Activated T-helper 2 cell treated with anti-CD3 and anti-CD28 coated beads, Interferon-gamma antibody, Interleukin-2, Interleukin-4, amounts not matched to agents 10 μg/mL and 5 μg/mL and 100 μg/mL, durations not matched to agents 14 hours and 24 hours and 36 hours (primary cell): ENCODE measurements at regions of chr21 and their contacts with region 1.

Region 1: DNA sequence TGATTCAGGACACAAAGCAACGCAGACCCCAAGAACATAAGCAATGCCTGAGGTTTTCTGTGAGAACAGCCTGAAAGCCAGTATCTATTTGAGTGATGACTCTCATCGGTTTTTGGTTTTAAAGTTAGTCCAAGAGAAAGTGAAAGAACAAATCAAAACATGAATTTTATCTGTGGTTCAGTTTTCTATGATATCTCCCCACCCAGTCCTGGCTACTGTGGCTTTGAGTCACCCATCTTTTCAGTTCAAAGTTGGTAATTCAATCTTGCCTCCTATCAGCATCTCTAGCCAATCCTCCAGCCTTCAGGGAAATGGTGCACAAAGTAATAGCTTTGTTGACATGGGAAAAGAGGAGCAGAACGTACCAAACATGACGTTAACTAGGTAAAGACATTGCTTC is 40.5 kb upstream of the KRTAP19-8 start:
- DNase-seq: no peak
- H3K4me3 Mint-ChIP-seq: no peak overlapping the region
- H3K27ac Mint-ChIP-seq: no peak overlapping the region
- H3K4me1 Mint-ChIP-seq: peaks cover 17% of the 10 kb centered on the region
- H3K27me3 Mint-ChIP-seq: peaks cover 61% of the 10 kb centered on the region

Region 2: GRCh38 chr21:30839304-30839703 is 239.5 kb before region 1 on chr21:
- intact Hi-C with region 1: loop called (anchors 5 kb)
- DNase-seq: peak; percentile 10
- H3K4me3 Mint-ChIP-seq: no peak overlapping the region
- H3K27ac Mint-ChIP-seq: no peak overlapping the region
- H3K4me1 Mint-ChIP-seq: peaks cover 3% of the 10 kb centered on the region
- H3K27me3 Mint-ChIP-seq: peaks cover 13% of the 10 kb centered on the region